Transverse colon (tissue), 4 donors: ENCODE measurements at regions of chr3 and their contacts with region 1.

Region 1: GRCh38 chr3:160225176-160226025 is at the start of gene C3orf80:
- DNase-seq: peak; percentile 53
- H3K4me3 ChIP-seq: peak within 1 kb of the TSS; percentile 40 to 69 (median 55)
- H3K27ac ChIP-seq: peak within 1 kb of the TSS; percentile 30 to 73 (median 70)
- H3K4me1 ChIP-seq: peaks cover 0 to 22% (median 11%) of the 10 kb centered on the region in 4 donors
- H3K27me3 ChIP-seq: peaks cover 40% of the 10 kb centered on the region
- CTCF ChIP-seq: peak in 1 of 5 experiments; percentile 18
- EP300 ChIP-seq: no peak
- POLR2A ChIP-seq: no peak
- total RNA-seq, gene C3orf80: 0.40 to 3.7 (median 1.8) TPM

Region 2: DNA sequence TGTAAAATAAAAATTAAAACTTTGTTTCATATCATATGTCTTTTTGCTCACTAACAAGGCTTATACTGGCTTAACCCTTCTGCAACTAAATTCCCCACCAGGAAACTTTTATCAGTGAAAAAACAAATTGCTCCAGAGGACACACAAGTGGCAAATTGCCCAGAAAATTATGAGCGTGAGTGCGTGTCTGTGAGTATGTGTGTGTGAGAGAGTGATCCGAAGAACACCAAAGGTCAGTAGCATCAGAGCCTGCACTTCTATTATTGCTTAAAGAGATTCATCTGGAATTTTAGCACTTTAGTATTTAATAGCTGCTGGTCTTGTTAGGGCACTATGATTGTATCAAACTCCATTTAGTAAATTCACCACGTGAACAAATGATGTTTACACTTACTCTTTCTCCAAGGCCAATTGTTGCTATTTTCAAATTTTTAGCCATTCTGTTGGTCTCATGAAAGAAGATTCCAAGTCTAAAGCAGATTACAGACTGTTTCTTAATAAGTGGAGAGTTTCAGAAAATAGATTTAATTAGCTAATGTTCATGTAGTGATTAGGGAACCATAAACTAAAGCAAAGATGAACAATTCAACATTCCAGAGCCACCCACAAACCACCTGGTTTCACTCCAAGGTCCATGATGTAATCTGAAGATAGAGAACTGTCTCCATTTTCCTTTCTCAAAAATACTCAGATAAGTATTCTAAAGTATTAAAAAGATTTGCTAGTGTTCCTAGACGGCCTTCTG is 327.9 kb before region 1 on chr3:
- in situ Hi-C with region 1: no loop called
- intact Hi-C with region 1: no loop called
- DNase-seq: no peak
- H3K4me3 ChIP-seq: no peak overlapping the region
- H3K27ac ChIP-seq: peak overlapping the region in 2 of 4 donors; percentile 15 to 44
- H3K4me1 ChIP-seq: peaks cover 0 to 15% (median 0%) of the 10 kb centered on the region in 4 donors
- H3K27me3 ChIP-seq: no peaks in the 10 kb centered on the region
- CTCF ChIP-seq: no peak
- EP300 ChIP-seq: no peak
- POLR2A ChIP-seq: no peak

Region 3: GRCh38 chr3:160163229-160163878 is 62.0 kb before region 1 on chr3:
- in situ Hi-C with region 1: no loop called
- intact Hi-C with region 1: loop called (anchors 10 kb)
- DNase-seq: no peak
- H3K4me3 ChIP-seq: no peak overlapping the region
- H3K27ac ChIP-seq: no peak overlapping the region
- H3K4me1 ChIP-seq: peaks cover 0 to 5% (median 1%) of the 10 kb centered on the region in 4 donors
- H3K27me3 ChIP-seq: no peaks in the 10 kb centered on the region
- CTCF ChIP-seq: peak; percentile 40 to 61 (median 45)
- EP300 ChIP-seq: no peak
- POLR2A ChIP-seq: no peak

Region 4: DNA sequence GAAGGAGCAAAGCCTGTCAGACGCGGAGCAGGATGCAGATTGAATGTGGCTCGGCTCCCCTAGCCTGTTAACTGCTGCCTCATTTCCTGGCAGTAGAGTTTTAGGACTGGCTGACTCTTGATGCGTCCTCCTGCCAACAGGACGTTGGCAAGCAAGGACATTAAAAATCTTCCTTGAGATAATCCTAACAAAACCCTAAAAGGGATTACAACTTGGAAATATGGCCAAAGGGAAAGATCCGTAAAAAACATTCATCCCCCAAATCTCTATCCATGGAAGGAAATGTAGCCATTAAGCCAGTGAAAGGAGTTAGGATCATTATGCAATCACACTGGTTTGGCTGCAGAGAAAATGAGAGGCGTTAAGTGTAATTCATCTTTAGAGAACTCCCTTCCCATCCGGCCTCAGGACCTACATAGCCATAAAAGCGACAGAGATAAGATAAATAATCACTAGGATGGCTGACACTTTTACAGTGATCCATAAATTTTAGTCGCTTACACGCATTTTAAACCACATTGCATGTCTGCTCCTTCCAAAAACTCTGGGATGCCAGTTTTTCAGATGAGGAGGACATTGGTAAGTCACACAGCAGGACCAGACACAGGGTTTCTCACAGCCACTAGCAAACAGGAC is 44.7 kb before region 1 on chr3:
- in situ Hi-C with region 1: no loop called
- intact Hi-C with region 1: loop called (anchors 5 kb)
- DNase-seq: no peak
- H3K4me3 ChIP-seq: no peak overlapping the region
- H3K27ac ChIP-seq: peak overlapping the region; percentile 44 to 76 (median 64)
- H3K4me1 ChIP-seq: peaks cover 0 to 30% (median 6%) of the 10 kb centered on the region in 4 donors
- H3K27me3 ChIP-seq: no peaks in the 10 kb centered on the region
- CTCF ChIP-seq: no peak
- EP300 ChIP-seq: peak; percentile 79
- POLR2A ChIP-seq: no peak

Region 5: GRCh38 chr3:160200353-160200752 is 25.0 kb before region 1 on chr3:
- in situ Hi-C with region 1: no loop called
- intact Hi-C with region 1: loop called (anchors 1 kb)
- DNase-seq: no peak
- H3K4me3 ChIP-seq: no peak overlapping the region
- H3K27ac ChIP-seq: no peak overlapping the region
- H3K4me1 ChIP-seq: no peaks in the 10 kb centered on the region
- H3K27me3 ChIP-seq: no peaks in the 10 kb centered on the region
- CTCF ChIP-seq: no peak
- EP300 ChIP-seq: no peak
- POLR2A ChIP-seq: no peak

Region 6: GRCh38 chr3:160253298-160253697 is 27.9 kb after region 1 on chr3:
- in situ Hi-C with region 1: no loop called
- intact Hi-C with region 1: loop called (anchors 2 kb)
- DNase-seq: no peak
- H3K4me3 ChIP-seq: no peak overlapping the region
- H3K27ac ChIP-seq: peak overlapping the region in 2 of 4 donors; percentile 2 to 19
- H3K4me1 ChIP-seq: no peaks in the 10 kb centered on the region
- H3K27me3 ChIP-seq: no peaks in the 10 kb centered on the region
- CTCF ChIP-seq: no peak
- EP300 ChIP-seq: no peak
- POLR2A ChIP-seq: no peak